Left cardiac atrium (tissue), 4 donors: ENCODE measurements at regions of chr1 and their contacts with region 1.

Region 1: DNA sequence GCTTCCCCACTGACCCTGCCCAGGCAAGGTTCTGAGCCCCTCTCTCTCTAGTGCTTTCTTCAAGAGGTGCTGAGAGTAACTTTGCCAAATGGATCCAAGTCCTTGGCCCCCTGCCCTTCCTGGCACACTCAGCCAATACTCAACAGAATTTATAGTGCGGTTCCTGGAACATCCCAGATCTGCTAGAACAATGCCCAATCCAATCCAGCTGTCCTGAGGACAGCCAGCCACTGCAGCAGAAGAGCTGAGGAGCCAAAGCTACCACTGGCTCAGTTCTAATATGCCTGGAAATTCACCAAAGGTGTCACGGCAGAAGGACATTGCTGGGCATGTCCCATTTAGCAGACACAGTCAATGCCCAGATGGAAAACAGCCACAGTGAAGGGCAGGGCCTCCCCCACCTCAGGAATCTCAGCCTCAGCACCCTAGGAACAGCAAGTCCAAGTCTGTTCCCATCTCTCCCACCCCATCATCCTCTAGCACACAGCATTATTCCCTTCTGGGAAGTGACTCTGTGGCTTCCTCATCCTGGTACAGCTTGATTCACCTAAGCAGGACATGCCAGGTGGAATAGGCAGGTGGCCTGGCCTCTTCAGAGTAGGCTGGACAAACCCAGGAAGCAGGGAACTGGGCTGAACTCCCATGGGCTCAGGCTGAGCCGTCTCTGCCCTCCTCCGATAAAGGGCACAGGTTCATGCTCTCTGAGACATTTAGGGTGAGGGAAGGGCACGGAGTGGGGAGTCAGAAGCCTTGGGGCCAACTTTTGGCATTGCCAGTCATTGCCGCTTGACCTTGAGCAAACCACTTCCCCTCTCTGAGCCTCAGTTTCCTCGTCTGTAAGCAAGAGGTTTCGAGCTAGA is 24.6 kb downstream of the PMVK start:
- DNase-seq: peak; percentile 29
- ATAC-seq: peak; percentile 69 to 87

Region 2: GRCh38 chr1:154936555-154937084 is 24.7 kb after region 1 on chr1 and contains the start of gene PMVK:
- intact Hi-C with region 1: loop called in 1 of 2 experiments (anchors 2 kb)
- DNase-seq: peak; percentile 96
- ATAC-seq: peak; percentile 94 to 97
- total RNA-seq, gene PMVK: 55.9 to 63.7 TPM

Region 3: GRCh38 chr1:155063550-155064110 is 151.7 kb after region 1 on chr1 and contains the start of gene EFNA4:
- intact Hi-C with region 1: loop called in 1 of 2 experiments (anchors 5 kb)
- DNase-seq: peak; percentile 85
- ATAC-seq: peak; percentile 92
- total RNA-seq, gene EFNA4: 2.5 to 2.7 TPM